Activated CD8-positive, alpha-beta T cell treated with anti-CD3 and anti-CD28 coated beads for 36 hours (primary cell): ENCODE measurements at regions of chr5 and their contacts with region 1.

Region 1: DNA sequence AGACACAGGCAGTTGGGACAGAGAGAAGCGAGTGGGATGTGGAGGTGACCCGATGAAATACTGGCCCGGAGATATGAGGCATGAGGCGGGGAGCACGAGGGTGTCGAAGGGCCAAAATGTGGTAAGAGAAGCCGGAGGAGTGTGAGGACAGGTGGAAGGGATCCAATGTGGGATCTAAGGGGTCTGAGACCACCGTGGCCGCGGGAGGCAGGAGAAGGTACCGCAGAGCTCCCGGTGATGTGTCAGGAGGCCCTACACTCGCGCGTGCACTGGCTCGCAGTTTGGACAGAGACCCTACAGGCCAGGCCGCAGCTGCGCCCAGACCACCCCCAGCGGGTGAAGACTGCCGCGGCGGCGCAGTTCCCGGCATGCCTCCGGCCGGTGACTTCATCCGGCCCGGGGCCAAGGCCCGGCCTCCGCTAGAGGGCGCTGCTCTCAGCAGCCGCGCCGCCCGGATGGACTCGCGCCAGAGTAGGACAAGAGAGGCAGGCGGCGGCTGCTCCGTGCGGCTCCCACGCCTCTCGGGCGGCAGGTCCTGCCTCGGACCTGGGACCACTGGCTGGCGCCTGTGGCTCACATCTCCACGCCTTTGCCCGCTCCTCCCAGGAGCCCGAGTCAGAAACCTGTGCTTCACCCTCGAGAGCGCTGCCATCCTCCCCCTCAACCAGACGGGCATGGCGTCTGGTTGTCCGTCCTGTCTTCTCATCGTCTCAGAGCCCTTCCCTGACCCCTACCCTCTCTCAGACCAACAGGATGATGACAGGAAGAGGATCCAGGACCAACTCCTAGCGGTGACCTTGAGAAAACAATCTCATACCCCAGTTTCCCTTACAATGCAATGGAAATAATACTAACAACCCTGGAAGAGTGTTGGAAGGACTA is 35.4 kb upstream of the STING1 start:
- DNase-seq: peak; percentile 91
- ATAC-seq: peak; percentile 92
- H3K4me3 Mint-ChIP-seq: peak overlapping the region; percentile 74
- H3K27ac Mint-ChIP-seq: peak overlapping the region; percentile 90
- H3K4me1 Mint-ChIP-seq: peaks cover 19% of the 10 kb centered on the region
- H3K27me3 Mint-ChIP-seq: peaks cover 1% of the 10 kb centered on the region
- CTCF ChIP-seq: peak; percentile 98

Region 2: GRCh38 chr5:138999674-139000073 is 518.2 kb before region 1 on chr5:
- CTCF ChIA-PET with region 1: no interaction called
- POLR2A ChIA-PET with region 1: no interaction called
- intact Hi-C with region 1: no loop called
- DNase-seq: no peak
- ATAC-seq: no peak
- H3K4me3 Mint-ChIP-seq: no peak overlapping the region
- H3K27ac Mint-ChIP-seq: no peak overlapping the region
- H3K4me1 Mint-ChIP-seq: no peaks in the 10 kb centered on the region
- H3K27me3 Mint-ChIP-seq: no peaks in the 10 kb centered on the region
- CTCF ChIP-seq: no peak

Region 3: DNA sequence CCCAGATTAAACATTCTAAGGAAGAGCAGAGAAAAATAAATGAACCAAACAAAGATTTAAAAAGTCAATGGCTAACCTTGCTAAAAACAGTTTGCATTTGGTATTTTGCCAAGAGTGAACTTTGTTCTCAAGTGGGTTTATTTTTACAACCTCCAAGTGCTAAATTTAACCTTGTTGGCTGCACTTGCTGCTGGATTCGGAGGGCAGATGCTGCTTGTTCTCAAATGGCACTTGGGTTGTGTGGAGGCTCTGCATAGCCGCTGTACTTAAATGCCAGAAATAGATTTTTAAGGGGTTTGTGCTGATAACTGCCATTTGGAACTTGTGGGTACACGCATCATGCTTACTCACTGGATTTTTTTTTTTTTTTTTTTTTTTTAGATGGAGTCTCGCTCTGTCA is 100.7 kb before region 1 on chr5:
- CTCF ChIA-PET with region 1: interaction called, 444 read pairs
- POLR2A ChIA-PET with region 1: interaction called, 13 read pairs
- intact Hi-C with region 1: loop called (anchors 1 kb)
- DNase-seq: no peak
- ATAC-seq: no peak
- H3K4me3 Mint-ChIP-seq: no peak overlapping the region
- H3K27ac Mint-ChIP-seq: peak overlapping the region; percentile 96
- H3K4me1 Mint-ChIP-seq: peaks cover 46% of the 10 kb centered on the region
- H3K27me3 Mint-ChIP-seq: no peaks in the 10 kb centered on the region
- CTCF ChIP-seq: no peak

Region 4: DNA sequence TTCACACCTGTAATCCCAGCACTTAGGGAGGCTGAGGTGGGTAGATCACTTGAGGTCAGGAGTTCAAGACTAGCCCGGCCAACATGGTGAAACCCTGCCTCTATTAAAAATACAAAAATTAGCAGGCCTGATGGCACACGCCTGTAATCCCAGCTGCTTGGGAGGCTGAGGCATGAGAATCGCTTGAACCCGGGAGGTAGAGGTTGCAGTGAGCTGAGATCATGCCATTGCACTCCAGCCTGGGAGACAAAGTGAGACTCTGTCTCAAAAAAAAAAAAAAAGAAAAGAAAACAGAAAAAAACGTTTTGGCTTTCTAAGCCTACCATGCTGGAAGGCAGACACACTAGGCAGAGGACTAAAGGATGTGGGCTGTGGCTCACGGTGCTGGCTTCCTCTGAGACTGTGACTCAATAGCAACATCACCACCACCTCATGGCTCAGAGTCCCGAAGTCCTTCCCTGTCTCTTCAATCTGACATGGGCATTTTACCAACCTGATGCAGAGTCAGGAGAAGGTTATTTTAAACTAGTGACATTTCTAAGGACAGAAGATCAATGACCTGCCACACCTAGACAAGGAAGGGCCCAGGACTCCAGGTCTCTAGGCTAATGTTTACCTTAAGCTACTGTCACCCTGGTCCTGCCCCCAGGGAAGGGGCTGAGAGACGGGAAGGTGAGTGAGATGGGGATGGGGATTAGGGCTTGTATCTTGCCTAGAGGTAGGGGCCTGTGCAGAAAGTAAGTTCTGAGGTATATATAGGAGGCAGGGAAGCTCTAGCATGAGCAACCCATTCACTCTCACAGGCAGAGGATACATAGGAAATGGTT is 59.1 kb before region 1 on chr5:
- CTCF ChIA-PET with region 1: interaction called, 17 read pairs
- POLR2A ChIA-PET with region 1: interaction called, 3 read pairs
- intact Hi-C with region 1: no loop called
- DNase-seq: peak; percentile 94
- ATAC-seq: peak; percentile 91
- H3K4me3 Mint-ChIP-seq: peak overlapping the region; percentile 43
- H3K27ac Mint-ChIP-seq: peak overlapping the region; percentile 88
- H3K4me1 Mint-ChIP-seq: peaks cover 43% of the 10 kb centered on the region
- H3K27me3 Mint-ChIP-seq: no peaks in the 10 kb centered on the region
- CTCF ChIP-seq: no peak

Region 5: GRCh38 chr5:139482050-139482889 is 35.7 kb before region 1 on chr5 and contains the start of gene STING1:
- CTCF ChIA-PET with region 1: interaction called, 31 read pairs
- POLR2A ChIA-PET with region 1: interaction called, 5 read pairs
- intact Hi-C with region 1: no loop called
- DNase-seq: peak; percentile 77
- ATAC-seq: peak; percentile 80
- H3K4me3 Mint-ChIP-seq: peak within 1 kb of the TSS; percentile 80
- H3K27ac Mint-ChIP-seq: peak within 1 kb of the TSS; percentile 91
- H3K4me1 Mint-ChIP-seq: peaks cover 34% of the 10 kb centered on the region
- H3K27me3 Mint-ChIP-seq: no peaks in the 10 kb centered on the region
- CTCF ChIP-seq: no peak
- total RNA-seq, gene STING1: 43.7 to 46.3 TPM

Region 6: GRCh38 chr5:139501381-139501780 is 16.5 kb before region 1 on chr5:
- CTCF ChIA-PET with region 1: interaction called, 18 read pairs
- POLR2A ChIA-PET with region 1: no interaction called
- intact Hi-C with region 1: no loop called
- DNase-seq: no peak
- ATAC-seq: no peak
- H3K4me3 Mint-ChIP-seq: no peak overlapping the region
- H3K27ac Mint-ChIP-seq: no peak overlapping the region
- H3K4me1 Mint-ChIP-seq: no peaks in the 10 kb centered on the region
- H3K27me3 Mint-ChIP-seq: no peaks in the 10 kb centered on the region
- CTCF ChIP-seq: no peak